ENCODE measurements at regions of chr12 and their contacts with region 1.

Region 1: GRCh38 chr12:14239350-14239934 is 126.0 kb upstream of the ATF7IP start:
- DNase-seq: peak; percentile 34
- ATAC-seq: peak; percentile 80
- H3K4me3 Mint-ChIP-seq: peak overlapping the region; percentile 48
- H3K27ac Mint-ChIP-seq: peak overlapping the region; percentile 35
- H3K4me1 Mint-ChIP-seq: peaks cover 26% of the 10 kb centered on the region
- H3K27me3 Mint-ChIP-seq: no peaks in the 10 kb centered on the region
- CTCF ChIP-seq: no peak

Region 2: GRCh38 chr12:14417715-14418114 is 178.3 kb after region 1 on chr12:
- CTCF ChIA-PET with region 1: interaction called, 17 read pairs
- POLR2A ChIA-PET with region 1: no interaction called
- DNase-seq: peak; percentile 77
- ATAC-seq: peak; percentile 81
- H3K4me3 Mint-ChIP-seq: peak overlapping the region; percentile 61
- H3K27ac Mint-ChIP-seq: peak overlapping the region; percentile 99
- H3K4me1 Mint-ChIP-seq: peaks cover 77% of the 10 kb centered on the region
- H3K27me3 Mint-ChIP-seq: no peaks in the 10 kb centered on the region
- CTCF ChIP-seq: no peak

Region 3: GRCh38 chr12:14678547-14679150 is 439.2 kb after region 1 on chr12:
- CTCF ChIA-PET with region 1: no interaction called
- POLR2A ChIA-PET with region 1: no interaction called
- DNase-seq: no peak
- ATAC-seq: 0 out of 2 replicates have a peak, but pooled peaks have one; percentile 34
- H3K4me3 Mint-ChIP-seq: no peak overlapping the region
- H3K27ac Mint-ChIP-seq: no peak overlapping the region
- H3K4me1 Mint-ChIP-seq: no peaks in the 10 kb centered on the region
- H3K27me3 Mint-ChIP-seq: peaks cover 19% of the 10 kb centered on the region
- CTCF ChIP-seq: no peak